ENCODE measurements at regions of chr7 and their contacts with region 1.

Region 1: DNA sequence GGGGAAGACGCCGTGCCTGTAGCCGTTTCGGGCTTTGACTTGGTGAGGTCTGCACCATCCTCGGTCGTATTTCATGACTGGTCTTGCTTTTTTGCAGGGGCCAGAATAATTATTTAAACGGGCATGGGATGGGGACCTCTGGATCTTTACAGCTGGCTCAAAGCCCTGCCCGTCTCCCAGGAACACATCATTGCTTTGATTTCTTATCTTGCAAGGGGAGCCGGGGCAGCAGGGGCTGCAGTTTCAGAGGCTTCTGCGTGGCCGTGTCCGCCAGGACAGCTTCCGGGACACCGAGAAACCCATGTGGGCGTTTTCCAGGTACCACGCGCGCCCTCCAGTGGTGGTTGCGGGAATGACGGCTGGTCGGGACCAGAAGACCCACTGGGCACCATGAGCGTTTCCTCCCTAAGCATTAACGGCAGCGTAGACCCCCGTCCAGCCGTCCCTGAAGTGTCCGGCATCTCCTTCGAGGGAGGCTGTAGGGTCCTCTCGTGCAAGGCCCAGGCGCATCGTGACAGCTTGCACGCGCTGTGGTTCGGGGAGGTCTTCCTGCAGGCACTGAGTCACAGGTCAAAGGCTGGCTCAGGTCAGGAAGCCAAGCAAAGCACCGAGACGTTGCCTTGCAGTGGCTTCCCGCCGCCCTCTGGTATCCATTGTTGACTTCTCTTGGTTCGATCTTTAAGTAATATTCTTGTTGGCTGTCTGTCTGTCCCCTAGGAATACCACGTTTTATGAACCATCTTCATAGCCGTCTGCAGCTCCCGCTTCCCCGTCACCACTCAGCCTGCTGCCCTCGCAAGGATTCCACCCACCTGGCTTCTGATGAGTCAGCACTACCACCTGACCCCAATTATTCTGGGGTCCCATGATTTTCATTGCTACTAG is 16.2 kb upstream of the ZFAND2A start:
- DNase-seq: peak; percentile 79 to 85
- ATAC-seq: peak; percentile 86 to 92
- H3K4me3 ChIP-seq: peak overlapping the region; percentile 34
- H3K27ac ChIP-seq: peak overlapping the region; percentile 78 to 87
- H3K4me1 ChIP-seq: peaks cover 11% of the 10 kb centered on the region; the same call in 2 of the 3 replicates
- CTCF ChIP-seq: peak; percentile 86
- EP300 ChIP-seq: no peak
- POLR2A ChIP-seq: 0 out of 2 replicates have a peak, but pooled peaks have one; percentile 23
- RAD21 ChIP-seq: peak; percentile 70 to 79

Region 2: DNA sequence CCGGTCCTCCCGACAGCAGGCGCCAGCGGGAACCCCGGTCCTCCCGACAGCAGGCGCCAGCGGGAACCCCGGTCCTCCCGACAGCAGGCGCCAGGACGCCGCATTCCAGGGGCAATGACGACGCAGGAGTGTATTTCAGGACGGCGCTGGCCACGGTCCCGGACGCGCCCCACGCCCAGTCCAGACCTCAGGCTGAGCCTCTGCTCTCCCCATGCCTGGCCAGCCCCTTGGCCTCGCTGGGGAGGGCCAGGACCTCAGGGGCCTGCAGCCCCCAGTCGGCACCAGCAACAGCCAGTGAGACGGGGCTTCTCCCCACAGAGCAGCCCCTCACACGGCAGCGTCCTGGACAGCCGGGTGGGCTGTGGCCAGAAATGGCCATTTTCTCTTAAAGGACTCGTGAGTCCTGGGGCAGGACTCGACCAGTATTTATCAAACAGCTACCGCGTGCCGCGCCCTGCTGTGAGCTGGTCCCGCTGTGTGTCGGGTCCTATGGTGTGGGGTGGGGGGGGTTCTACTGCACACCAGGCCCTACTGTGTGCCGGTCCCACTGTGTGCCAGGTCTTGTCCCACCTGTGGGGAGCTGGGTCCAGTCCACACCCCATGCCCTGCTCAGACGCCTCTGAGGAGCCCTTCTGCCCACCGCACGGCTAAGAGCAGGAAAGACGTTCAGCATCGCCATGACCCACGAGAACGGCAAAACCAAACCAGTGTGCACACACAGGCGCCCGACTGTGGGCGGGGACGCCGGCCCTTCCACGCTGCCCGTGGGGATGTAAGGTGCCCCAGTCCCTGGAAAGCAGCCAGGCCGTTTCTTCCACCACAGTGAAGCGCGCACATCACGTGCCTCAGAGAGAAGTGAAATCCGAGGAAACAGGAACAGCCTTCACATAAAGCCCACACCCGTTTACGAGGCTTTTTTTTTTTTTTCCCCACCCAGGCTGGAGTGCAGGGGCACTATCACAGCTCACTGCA is 266.6 kb before region 1 on chr7:
- CTCF ChIA-PET with region 1: interaction called, 17 read pairs
- POLR2A ChIA-PET with region 1: no interaction called
- DNase-seq: peak; percentile 42 to 50
- ATAC-seq: peak; percentile 36 to 69
- H3K4me3 ChIP-seq: peak overlapping the region; percentile 42
- H3K27ac ChIP-seq: peak overlapping the region; percentile 54 to 80; a peak in 5 of 6 replicates
- H3K4me1 ChIP-seq: peaks cover 15% of the 10 kb centered on the region
- CTCF ChIP-seq: no peak; the same call in 1 of the 3 replicates
- EP300 ChIP-seq: no peak
- POLR2A ChIP-seq: no peak
- RAD21 ChIP-seq: no peak

Region 3: DNA sequence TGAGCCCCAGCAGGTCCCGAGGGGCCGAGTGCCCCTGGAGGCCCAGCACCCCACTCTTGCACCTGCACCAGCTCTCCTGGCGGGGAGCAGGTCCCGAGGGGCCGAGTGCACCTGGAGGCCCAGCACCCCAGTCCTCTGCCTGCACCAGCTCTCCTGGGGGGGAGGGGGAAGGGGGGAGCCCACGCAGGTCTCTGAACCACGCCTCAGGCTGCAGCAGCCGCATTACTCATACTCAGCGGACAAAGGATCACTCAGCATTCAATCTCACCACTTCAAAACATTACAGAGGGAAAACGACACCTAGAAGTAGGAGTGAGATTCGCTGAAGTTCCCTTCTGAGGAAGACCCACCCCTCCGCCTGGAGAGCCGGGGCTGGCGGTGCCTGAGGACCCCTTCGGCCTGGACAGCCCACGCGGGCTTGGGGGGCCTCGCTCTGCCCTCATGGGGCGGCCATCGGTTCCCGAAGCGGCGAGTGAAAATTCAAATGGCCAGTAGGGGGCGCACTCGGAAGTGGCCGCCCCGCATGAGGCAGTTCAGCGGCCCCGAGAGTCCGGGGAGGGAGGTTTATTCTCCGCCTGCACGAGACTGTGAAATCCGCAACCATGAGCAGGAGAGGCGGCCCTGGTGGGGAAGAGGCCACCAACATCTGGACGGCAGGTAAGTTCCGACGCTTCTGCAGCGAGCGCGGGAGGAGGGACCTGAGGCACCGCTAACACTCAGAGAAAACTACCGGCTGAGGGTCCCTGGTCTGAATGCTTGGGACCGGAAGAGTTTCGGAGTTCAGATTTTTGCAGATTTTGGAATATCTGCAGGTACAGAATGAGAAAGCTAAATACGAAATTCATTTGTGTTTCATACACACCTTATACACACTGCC is 89.4 kb before region 1 on chr7:
- CTCF ChIA-PET with region 1: interaction called, 44 read pairs
- POLR2A ChIA-PET with region 1: no interaction called
- DNase-seq: peak; percentile 53 to 92
- ATAC-seq: peak; percentile 87 to 91
- H3K4me3 ChIP-seq: peak overlapping the region; percentile 18; the same call in 1 of the 3 replicates
- H3K27ac ChIP-seq: peak overlapping the region; percentile 60 to 85
- H3K4me1 ChIP-seq: peaks cover 21% of the 10 kb centered on the region
- CTCF ChIP-seq: peak; percentile 94
- EP300 ChIP-seq: no peak
- POLR2A ChIP-seq: no peak
- RAD21 ChIP-seq: peak; percentile 53 to 61

Region 4: DNA sequence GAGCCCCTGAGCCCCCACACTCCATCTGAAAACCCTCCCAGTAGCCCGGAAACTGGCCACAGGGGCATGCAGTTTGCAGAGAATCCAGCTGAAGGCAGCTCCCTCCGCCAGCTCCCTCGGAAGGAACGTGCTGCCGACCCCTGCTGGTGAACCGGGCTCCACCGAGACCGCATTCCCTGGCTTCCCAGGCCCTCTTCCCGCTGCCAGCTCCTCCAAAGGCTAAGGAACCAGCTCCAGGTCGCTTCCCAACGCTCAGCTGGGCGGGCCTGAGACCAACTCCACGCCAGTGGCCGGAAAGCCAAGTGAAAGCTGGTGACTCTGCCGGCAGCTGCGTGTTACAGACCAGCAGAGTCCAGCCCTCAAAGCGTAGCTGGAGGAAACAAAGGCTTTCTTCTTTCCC is 52.5 kb before region 1 on chr7:
- CTCF ChIA-PET with region 1: interaction called, 10 read pairs
- POLR2A ChIA-PET with region 1: no interaction called
- DNase-seq: peak; percentile 12 to 53
- ATAC-seq: peak in 1 of 2 experiments; percentile 90; a peak in 3 of 6 replicates
- H3K4me3 ChIP-seq: no peak overlapping the region
- H3K27ac ChIP-seq: no peak overlapping the region
- H3K4me1 ChIP-seq: no peaks in the 10 kb centered on the region
- CTCF ChIP-seq: 0 out of 3 replicates have a peak, but pooled peaks have one; percentile 5
- EP300 ChIP-seq: no peak
- POLR2A ChIP-seq: no peak
- RAD21 ChIP-seq: no peak

Region 5: GRCh38 chr7:1159891-1160668 is 16.1 kb before region 1 on chr7 and contains the start of gene ZFAND2A:
- CTCF ChIA-PET with region 1: interaction called, 41 read pairs
- POLR2A ChIA-PET with region 1: interaction called, 5 read pairs
- DNase-seq: peak; percentile 97 to 98
- ATAC-seq: peak; percentile 90 to 92
- H3K4me3 ChIP-seq: peak within 1 kb of the TSS; percentile 72
- H3K27ac ChIP-seq: peak within 1 kb of the TSS; percentile 94 to 98
- H3K4me1 ChIP-seq: peaks cover 42% of the 10 kb centered on the region
- CTCF ChIP-seq: no peak
- EP300 ChIP-seq: no peak
- POLR2A ChIP-seq: peak; percentile 57
- RAD21 ChIP-seq: no peak
- polyA plus RNA-seq, gene ZFAND2A: 88.6 and 105 TPM in 2 replicates